ENCODE measurements at regions of chr7 and their contacts with region 1.

Region 1: GRCh38 chr7:107725151-107725740 is 18.7 kb upstream of the CBLL1 start:
- DNase-seq: peak in 8 of 9 experiments; percentile 15 to 77 (median 48)
- ATAC-seq: peak; percentile 38
- H3K4me3 ChIP-seq: no peak overlapping the region
- H3K4me3 Mint-ChIP-seq: no peak overlapping the region
- H3K27ac ChIP-seq: no peak overlapping the region
- H3K27ac Mint-ChIP-seq: no peak overlapping the region
- H3K4me1 ChIP-seq: no peaks in the 10 kb centered on the region
- H3K4me1 Mint-ChIP-seq: no peaks in the 10 kb centered on the region
- H3K27me3 ChIP-seq: no peaks in the 10 kb centered on the region
- H3K27me3 Mint-ChIP-seq: peaks cover 15% of the 10 kb centered on the region
- CTCF ChIP-seq: peak; percentile 84

Region 2: DNA sequence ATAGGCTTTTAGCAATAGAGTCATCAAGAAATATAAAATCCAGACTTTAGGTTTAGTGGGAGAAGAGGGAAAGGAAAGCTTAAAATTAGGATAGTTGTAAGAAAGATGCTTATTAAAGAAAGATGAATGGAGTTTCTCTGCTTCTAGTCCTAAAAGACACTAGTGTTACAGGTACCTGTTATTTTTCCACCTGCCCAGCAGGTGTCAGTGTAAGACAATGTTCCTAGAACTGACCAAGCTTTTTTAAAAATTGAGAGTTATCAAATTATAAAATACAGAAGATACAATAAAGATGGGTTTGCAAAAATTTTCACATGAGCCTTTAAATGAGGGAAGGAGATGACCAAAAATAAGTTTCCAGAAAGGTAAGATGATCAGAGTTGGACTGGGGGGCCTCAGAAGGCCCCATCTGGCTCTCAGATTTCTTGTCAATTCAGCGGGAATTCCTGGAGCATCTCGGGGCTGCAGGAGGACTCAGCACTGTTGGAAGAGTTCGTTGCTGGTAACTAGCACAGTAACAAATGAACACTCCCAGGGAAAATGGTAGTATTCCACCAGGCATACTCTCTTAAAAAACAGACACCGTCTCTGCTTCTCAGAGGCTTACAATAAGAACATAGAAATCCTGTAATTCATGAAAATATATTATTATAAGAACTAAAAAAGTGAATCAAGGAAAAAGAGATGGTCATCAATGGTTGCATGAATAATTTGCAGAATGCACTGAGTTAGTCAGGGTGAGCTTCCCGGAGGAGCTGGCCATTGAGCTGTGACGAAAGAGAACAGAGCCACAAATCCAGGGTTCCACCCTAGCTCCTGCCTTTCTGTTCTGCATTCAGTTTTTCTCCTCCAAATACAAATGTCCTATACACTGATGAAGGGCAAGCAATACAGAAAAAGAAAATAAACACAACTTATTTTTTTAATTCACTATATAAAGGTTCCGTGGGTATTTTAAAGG is 932.0 kb before region 1 on chr7:
- CTCF ChIA-PET with region 1: no interaction called
- POLR2A ChIA-PET with region 1: interaction called, 3 read pairs
- intact Hi-C with region 1: loop called (anchors 1 to 2 kb)
- DNase-seq: peak in 6 of 9 experiments; percentile 16 to 75 (median 42)
- ATAC-seq: peak; percentile 82
- H3K4me3 ChIP-seq: no peak overlapping the region
- H3K4me3 Mint-ChIP-seq: no peak overlapping the region
- H3K27ac ChIP-seq: no peak overlapping the region
- H3K27ac Mint-ChIP-seq: no peak overlapping the region
- H3K4me1 ChIP-seq: no peaks in the 10 kb centered on the region
- H3K4me1 Mint-ChIP-seq: peaks cover 3% of the 10 kb centered on the region
- H3K27me3 ChIP-seq: no peaks in the 10 kb centered on the region
- H3K27me3 Mint-ChIP-seq: no peaks in the 10 kb centered on the region
- CTCF ChIP-seq: peak; percentile 88

Region 3: DNA sequence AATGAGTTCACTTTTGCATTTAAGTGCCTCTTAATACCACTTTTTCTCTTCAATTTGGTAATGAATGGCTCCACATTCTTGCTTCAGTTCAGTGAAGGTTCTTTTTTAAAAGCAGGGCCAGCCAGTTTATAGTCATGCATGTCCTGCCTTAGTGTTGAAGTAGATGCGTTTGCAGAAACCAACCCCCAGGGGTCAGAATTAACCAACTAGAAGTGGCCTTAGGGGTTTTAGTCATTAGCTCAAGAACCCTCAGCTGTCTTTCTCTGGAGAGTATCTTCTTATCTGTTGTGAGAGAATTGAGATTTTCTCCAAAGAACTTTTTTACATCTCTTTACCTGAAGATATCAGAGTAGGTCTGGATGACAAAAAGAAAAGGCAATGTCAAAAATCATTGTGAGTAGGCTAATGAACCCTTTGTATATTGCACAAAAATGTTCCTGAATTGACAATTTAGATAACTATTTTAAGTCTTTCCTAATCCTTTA is 778.0 kb before region 1 on chr7:
- CTCF ChIA-PET with region 1: no interaction called
- POLR2A ChIA-PET with region 1: no interaction called
- intact Hi-C with region 1: loop called (anchors 2 to 5 kb)
- DNase-seq: peak in 5 of 9 experiments; percentile 1 to 67 (median 37)
- ATAC-seq: peak; percentile 66
- H3K4me3 ChIP-seq: no peak overlapping the region
- H3K4me3 Mint-ChIP-seq: no peak overlapping the region
- H3K27ac ChIP-seq: no peak overlapping the region
- H3K27ac Mint-ChIP-seq: no peak overlapping the region
- H3K4me1 ChIP-seq: no peaks in the 10 kb centered on the region
- H3K4me1 Mint-ChIP-seq: no peaks in the 10 kb centered on the region
- H3K27me3 ChIP-seq: no peaks in the 10 kb centered on the region
- H3K27me3 Mint-ChIP-seq: no peaks in the 10 kb centered on the region
- CTCF ChIP-seq: peak; percentile 39

Region 4: GRCh38 chr7:107201795-107202450 is 523.3 kb before region 1 on chr7:
- CTCF ChIA-PET with region 1: no interaction called
- POLR2A ChIA-PET with region 1: no interaction called
- intact Hi-C with region 1: loop called in 1 of 2 experiments (anchors 2 kb)
- DNase-seq: peak in 4 of 9 experiments; percentile 16 to 48 (median 37)
- ATAC-seq: peak; percentile 57
- H3K4me3 ChIP-seq: no peak overlapping the region
- H3K4me3 Mint-ChIP-seq: no peak overlapping the region
- H3K27ac ChIP-seq: no peak overlapping the region
- H3K27ac Mint-ChIP-seq: no peak overlapping the region
- H3K4me1 ChIP-seq: no peaks in the 10 kb centered on the region
- H3K4me1 Mint-ChIP-seq: no peaks in the 10 kb centered on the region
- H3K27me3 ChIP-seq: no peaks in the 10 kb centered on the region
- H3K27me3 Mint-ChIP-seq: no peaks in the 10 kb centered on the region
- CTCF ChIP-seq: peak; percentile 37

Region 5: DNA sequence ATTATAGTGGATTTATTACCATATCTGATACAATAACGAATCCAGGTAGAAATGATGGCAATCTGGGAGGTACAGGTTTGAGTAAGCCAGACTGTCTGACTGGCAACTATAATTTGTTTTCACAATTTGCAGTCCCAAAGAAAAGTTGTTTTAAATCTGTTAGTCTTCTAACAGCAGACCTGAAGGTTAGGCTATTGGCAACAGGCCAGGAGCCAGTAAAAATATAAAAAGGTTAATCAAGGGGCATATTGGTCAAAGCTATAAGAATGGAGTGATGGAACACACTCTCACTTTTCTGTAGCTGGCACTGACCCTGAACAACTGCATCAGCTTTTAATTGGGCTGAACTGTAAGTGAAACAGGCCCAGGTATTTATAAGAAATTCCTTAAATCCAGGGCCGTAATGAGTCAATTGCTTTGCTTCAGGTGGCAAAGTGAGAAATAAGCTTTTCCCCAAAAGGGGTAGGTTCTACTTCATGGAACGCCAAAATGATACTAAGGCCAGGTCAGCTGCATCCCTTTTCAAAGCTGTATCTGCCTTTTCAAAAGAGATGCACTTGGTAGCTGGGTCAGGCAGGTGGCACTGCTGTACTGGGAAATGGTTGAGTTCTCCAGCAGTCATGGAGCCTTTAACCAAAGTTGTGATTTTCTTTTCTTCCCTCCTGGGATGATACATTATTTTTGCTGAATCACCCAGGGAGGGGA is 262.4 kb before region 1 on chr7:
- CTCF ChIA-PET with region 1: interaction called, 27 read pairs
- POLR2A ChIA-PET with region 1: no interaction called
- intact Hi-C with region 1: loop called in 1 of 2 experiments (anchors 1 kb)
- DNase-seq: peak in 8 of 9 experiments; percentile 3 to 72 (median 44)
- ATAC-seq: peak; percentile 65
- H3K4me3 ChIP-seq: no peak overlapping the region
- H3K4me3 Mint-ChIP-seq: no peak overlapping the region
- H3K27ac ChIP-seq: no peak overlapping the region
- H3K27ac Mint-ChIP-seq: no peak overlapping the region
- H3K4me1 ChIP-seq: no peaks in the 10 kb centered on the region
- H3K4me1 Mint-ChIP-seq: no peaks in the 10 kb centered on the region
- H3K27me3 ChIP-seq: no peaks in the 10 kb centered on the region
- H3K27me3 Mint-ChIP-seq: no peaks in the 10 kb centered on the region
- CTCF ChIP-seq: peak; percentile 69

Region 6: DNA sequence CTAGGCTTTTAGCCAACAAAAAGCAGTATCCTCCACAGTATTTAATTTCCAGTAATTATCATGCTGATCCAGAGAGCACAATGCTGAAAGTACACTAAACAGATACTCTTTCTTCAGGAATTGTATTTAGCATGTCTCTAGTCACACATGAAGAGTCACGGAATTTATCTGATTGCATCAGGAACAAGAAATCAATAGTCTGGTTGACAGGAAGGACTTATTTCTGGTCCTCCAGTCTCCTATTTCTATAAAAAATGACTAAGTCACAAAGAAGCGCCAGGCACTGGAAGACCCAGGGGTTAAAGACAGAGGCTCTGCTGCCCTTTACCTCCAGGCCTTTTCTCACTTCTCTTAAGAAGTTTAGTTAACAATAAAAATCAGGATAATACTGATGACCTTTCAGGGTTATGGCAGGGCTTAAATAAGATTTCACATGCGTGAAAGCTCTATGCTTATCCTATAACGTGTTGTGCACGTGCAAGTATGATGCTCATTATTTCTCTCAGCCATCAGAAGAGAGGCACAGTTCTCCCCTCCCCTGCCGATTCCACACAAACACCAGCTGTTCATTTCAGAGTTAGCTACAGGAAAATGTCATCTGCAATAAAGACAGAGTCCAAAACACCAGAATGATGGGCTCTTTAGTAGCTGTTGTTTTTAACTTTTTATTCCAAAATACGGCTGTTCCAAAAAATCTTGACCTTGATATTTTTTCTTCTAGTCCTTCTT is 27.8 kb before region 1 on chr7:
- CTCF ChIA-PET with region 1: interaction called, 11 read pairs
- POLR2A ChIA-PET with region 1: no interaction called
- intact Hi-C with region 1: no loop called
- DNase-seq: no peak
- ATAC-seq: no peak
- H3K4me3 ChIP-seq: no peak overlapping the region
- H3K4me3 Mint-ChIP-seq: no peak overlapping the region
- H3K27ac ChIP-seq: no peak overlapping the region
- H3K27ac Mint-ChIP-seq: no peak overlapping the region
- H3K4me1 ChIP-seq: no peaks in the 10 kb centered on the region
- H3K4me1 Mint-ChIP-seq: no peaks in the 10 kb centered on the region
- H3K27me3 ChIP-seq: no peaks in the 10 kb centered on the region
- H3K27me3 Mint-ChIP-seq: peaks cover 13% of the 10 kb centered on the region
- CTCF ChIP-seq: no peak

Region 7: GRCh38 chr7:107712025-107712424 is 13.2 kb before region 1 on chr7:
- CTCF ChIA-PET with region 1: interaction called, 12 read pairs
- POLR2A ChIA-PET with region 1: no interaction called
- intact Hi-C with region 1: no loop called
- DNase-seq: no peak
- ATAC-seq: no peak
- H3K4me3 ChIP-seq: no peak overlapping the region
- H3K4me3 Mint-ChIP-seq: no peak overlapping the region
- H3K27ac ChIP-seq: no peak overlapping the region
- H3K27ac Mint-ChIP-seq: no peak overlapping the region
- H3K4me1 ChIP-seq: no peaks in the 10 kb centered on the region
- H3K4me1 Mint-ChIP-seq: no peaks in the 10 kb centered on the region
- H3K27me3 ChIP-seq: no peaks in the 10 kb centered on the region
- H3K27me3 Mint-ChIP-seq: peaks cover 5% of the 10 kb centered on the region
- CTCF ChIP-seq: no peak

Measured in CD8-positive, alpha-beta T cell (primary cell).